ENCODE measurements at regions of chrX and their contacts with region 1.

Region 1: GRCh38 chrX:154980330-154981096 is 42.0 kb downstream of the F8 start:
- DNase-seq: peak; percentile 59 to 85 (median 76)
- ATAC-seq: peak; percentile 99
- H3K4me3 ChIP-seq: peak overlapping the region; percentile 43 to 46
- H3K4me3 Mint-ChIP-seq: peak overlapping the region; percentile 83
- H3K27ac ChIP-seq: peak overlapping the region; percentile 21 to 56
- H3K27ac Mint-ChIP-seq: peak overlapping the region; percentile 39
- H3K4me1 ChIP-seq: peaks cover 4% of the 10 kb centered on the region
- H3K4me1 Mint-ChIP-seq: peaks cover 3% of the 10 kb centered on the region
- H3K27me3 ChIP-seq: no peaks in the 10 kb centered on the region
- H3K27me3 Mint-ChIP-seq: no peaks in the 10 kb centered on the region
- CTCF ChIP-seq: peak; percentile 56

Region 2: GRCh38 chrX:155026726-155027508 is 46.4 kb after region 1 on chrX and contains the start of gene FUNDC2:
- CTCF ChIA-PET with region 1: no interaction called
- POLR2A ChIA-PET with region 1: no interaction called
- intact Hi-C with region 1: loop called (anchors 2 kb)
- DNase-seq: peak; percentile 87 to 97 (median 92)
- ATAC-seq: peak; percentile 85
- H3K4me3 ChIP-seq: peak within 1 kb of the TSS; percentile 73 to 76
- H3K4me3 Mint-ChIP-seq: peak within 1 kb of the TSS; percentile 88
- H3K27ac ChIP-seq: peak within 1 kb of the TSS; percentile 96 to 98
- H3K27ac Mint-ChIP-seq: peak within 1 kb of the TSS; percentile 96
- H3K4me1 ChIP-seq: no peaks in the 10 kb centered on the region
- H3K4me1 Mint-ChIP-seq: peaks cover 27% of the 10 kb centered on the region
- H3K27me3 ChIP-seq: no peaks in the 10 kb centered on the region
- H3K27me3 Mint-ChIP-seq: no peaks in the 10 kb centered on the region
- CTCF ChIP-seq: no peak
- total RNA-seq, gene FUNDC2: 46.5 to 50.8 TPM

Region 3: GRCh38 chrX:155070975-155071693 is 90.6 kb after region 1 on chrX and contains the starts of genes BRCC3, CMC4 and MTCP1:
- CTCF ChIA-PET with region 1: no interaction called
- POLR2A ChIA-PET with region 1: no interaction called
- intact Hi-C with region 1: loop called in 1 of 2 experiments (anchors 5 kb)
- DNase-seq: peak; percentile 55 to 86 (median 70)
- ATAC-seq: peak; percentile 78
- H3K4me3 ChIP-seq: peak within 1 kb of the TSS; percentile 81 to 83
- H3K4me3 Mint-ChIP-seq: peak within 1 kb of the TSS; percentile 88
- H3K27ac ChIP-seq: peak within 1 kb of the TSS; percentile 80 to 84
- H3K27ac Mint-ChIP-seq: peak within 1 kb of the TSS; percentile 96
- H3K4me1 ChIP-seq: peaks cover 11% of the 10 kb centered on the region
- H3K4me1 Mint-ChIP-seq: peaks cover 58% of the 10 kb centered on the region
- H3K27me3 ChIP-seq: no peaks in the 10 kb centered on the region
- H3K27me3 Mint-ChIP-seq: no peaks in the 10 kb centered on the region
- CTCF ChIP-seq: no peak
- total RNA-seq, gene BRCC3: 8.9 to 9.6 TPM
- total RNA-seq, gene CMC4: 5.0 to 5.2 TPM
- total RNA-seq, gene MTCP1: 16.9 to 19.0 TPM

Region 4: DNA sequence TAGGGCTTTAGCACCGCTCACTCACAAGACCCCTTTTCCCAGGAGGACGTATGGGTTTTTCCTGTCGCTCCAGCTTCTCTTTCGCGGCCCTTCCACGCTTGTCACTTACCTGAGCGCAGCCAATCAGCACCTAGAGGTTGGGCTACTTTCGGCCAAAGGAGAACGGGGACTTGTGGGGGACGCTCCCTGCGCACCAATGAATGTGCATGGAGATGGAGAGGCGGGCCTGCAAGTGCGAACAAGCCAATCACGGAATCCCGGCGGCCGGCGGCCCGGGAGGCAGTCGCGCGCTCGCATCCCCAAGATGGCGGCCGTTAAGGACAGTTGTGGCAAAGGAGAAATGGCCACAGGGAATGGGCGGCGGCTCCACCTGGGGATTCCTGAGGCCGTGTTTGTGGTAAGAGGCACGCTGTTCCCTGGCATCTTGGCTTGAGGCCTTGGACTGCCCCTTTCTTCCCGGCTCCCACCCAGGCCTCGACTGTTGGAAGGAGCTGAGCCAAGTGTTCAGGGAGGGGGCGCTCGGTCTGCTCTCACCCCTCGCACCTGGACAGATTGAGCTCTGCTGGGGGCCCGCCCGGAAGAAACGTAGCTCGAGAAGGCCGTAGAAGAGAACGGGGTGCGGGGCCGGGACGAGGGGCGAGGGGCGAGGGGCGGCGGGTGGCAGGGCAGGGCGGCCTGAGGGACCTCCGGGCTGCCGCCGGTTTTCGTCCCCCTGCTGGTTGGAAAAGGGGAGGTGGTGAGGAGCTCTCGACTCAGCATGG is 235.8 kb after region 1 on chrX and contains the start of gene VBP1:
- CTCF ChIA-PET with region 1: no interaction called
- POLR2A ChIA-PET with region 1: no interaction called
- intact Hi-C with region 1: loop called (anchors 2 to 10 kb)
- DNase-seq: peak; percentile 66 to 94 (median 85)
- ATAC-seq: peak; percentile 97
- H3K4me3 ChIP-seq: peak within 1 kb of the TSS; percentile 72 to 76
- H3K4me3 Mint-ChIP-seq: peak within 1 kb of the TSS; percentile 89
- H3K27ac ChIP-seq: peak within 1 kb of the TSS; percentile 56 to 87
- H3K27ac Mint-ChIP-seq: peak within 1 kb of the TSS; percentile 94
- H3K4me1 ChIP-seq: peaks cover 10% of the 10 kb centered on the region
- H3K4me1 Mint-ChIP-seq: peaks cover 29% of the 10 kb centered on the region
- H3K27me3 ChIP-seq: no peaks in the 10 kb centered on the region
- H3K27me3 Mint-ChIP-seq: no peaks in the 10 kb centered on the region
- CTCF ChIP-seq: no peak
- total RNA-seq, gene VBP1: 10.9 to 12.6 TPM

Region 5: GRCh38 chrX:155819966-155820491 is 839.5 kb after region 1 on chrX:
- CTCF ChIA-PET with region 1: no interaction called
- POLR2A ChIA-PET with region 1: no interaction called
- intact Hi-C with region 1: loop called (anchors 2 to 5 kb)
- DNase-seq: peak in 7 of 9 experiments; percentile 8 to 62 (median 36)
- ATAC-seq: no peak
- H3K4me3 ChIP-seq: no peak overlapping the region
- H3K4me3 Mint-ChIP-seq: no peak overlapping the region
- H3K27ac ChIP-seq: no peak overlapping the region
- H3K27ac Mint-ChIP-seq: no peak overlapping the region
- H3K4me1 ChIP-seq: no peaks in the 10 kb centered on the region
- H3K4me1 Mint-ChIP-seq: no peaks in the 10 kb centered on the region
- H3K27me3 ChIP-seq: peaks cover 0 to 2% of the 10 kb centered on the region in 2 experiments
- H3K27me3 Mint-ChIP-seq: peaks cover 15% of the 10 kb centered on the region
- CTCF ChIP-seq: peak; percentile 39